ENCODE measurements at regions of chr20 and their contacts with region 1.

Region 1: DNA sequence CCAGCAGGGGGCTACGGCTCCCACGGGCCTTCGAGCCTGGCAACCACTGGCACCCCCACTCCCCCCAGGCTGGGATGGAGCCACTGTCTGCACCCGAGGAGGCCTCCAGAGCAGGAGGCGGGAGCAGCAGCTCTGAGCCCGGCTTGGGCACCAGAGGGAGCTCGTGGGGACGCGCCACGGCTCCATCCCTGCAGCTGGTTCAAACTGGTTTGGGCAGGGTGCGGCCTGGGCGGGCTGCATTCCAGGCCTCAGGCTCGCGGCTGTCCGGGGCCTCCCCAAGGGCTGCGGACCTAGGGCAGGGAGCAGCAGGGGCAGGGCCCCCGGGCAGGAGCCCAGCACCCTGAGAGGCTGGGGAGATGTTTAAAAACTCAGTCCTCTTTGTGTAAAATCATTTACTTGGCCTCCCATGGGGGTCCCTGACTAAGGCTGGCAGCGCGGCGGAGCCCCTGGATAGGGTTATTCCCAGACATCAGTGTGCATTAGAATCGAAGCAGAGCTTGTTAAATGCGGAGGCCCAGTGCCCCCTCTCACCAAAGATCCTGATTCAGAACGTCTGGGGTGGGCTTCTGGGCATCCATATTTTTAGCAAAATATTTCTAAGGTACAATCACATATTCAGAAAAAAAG is 4.1 kb upstream of the BCAS4 start:
- DNase-seq: peak; percentile 58 to 89 (median 76)
- ATAC-seq: peak; percentile 54
- H3K4me3 ChIP-seq: peak overlapping the region in 1 of 2 experiments; percentile 10
- H3K4me3 Mint-ChIP-seq: peak overlapping the region; percentile 35
- H3K27ac ChIP-seq: peak overlapping the region; percentile 54 to 82
- H3K27ac Mint-ChIP-seq: peak overlapping the region; percentile 78
- H3K4me1 ChIP-seq: peaks cover 20% of the 10 kb centered on the region
- H3K4me1 Mint-ChIP-seq: peaks cover 17% of the 10 kb centered on the region
- H3K27me3 ChIP-seq: no peaks in the 10 kb centered on the region
- H3K27me3 Mint-ChIP-seq: no peaks in the 10 kb centered on the region
- CTCF ChIP-seq: peak; percentile 74

Region 2: DNA sequence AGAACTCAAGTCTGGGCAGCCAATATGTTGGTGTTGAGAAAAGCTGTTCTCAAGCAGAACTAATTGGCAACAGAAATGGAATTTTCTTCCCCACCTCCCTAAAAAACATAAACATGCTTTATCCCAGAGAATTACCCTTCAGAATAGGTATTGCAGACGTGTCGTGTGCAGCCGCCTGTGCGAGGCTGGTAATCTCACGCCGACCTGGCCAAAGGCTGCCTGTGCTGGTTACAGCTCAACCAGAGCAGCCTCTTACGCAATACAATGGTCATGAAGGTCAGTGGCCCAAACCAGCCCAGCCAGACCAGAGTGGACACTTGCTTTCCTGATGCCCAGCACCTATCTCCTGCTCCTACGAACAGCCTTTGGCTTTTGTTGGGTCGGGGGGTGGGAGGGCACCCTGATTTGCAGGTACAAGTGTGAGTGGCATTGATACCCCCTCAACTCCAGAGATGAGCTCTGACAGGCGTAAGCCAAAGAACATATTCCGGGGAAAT is 110.3 kb before region 1 on chr20:
- CTCF ChIA-PET with region 1: no interaction called
- POLR2A ChIA-PET with region 1: no interaction called
- intact Hi-C with region 1: no loop called
- DNase-seq: no peak
- ATAC-seq: no peak
- H3K4me3 ChIP-seq: no peak overlapping the region
- H3K4me3 Mint-ChIP-seq: no peak overlapping the region
- H3K27ac ChIP-seq: no peak overlapping the region
- H3K27ac Mint-ChIP-seq: no peak overlapping the region
- H3K4me1 ChIP-seq: no peaks in the 10 kb centered on the region
- H3K4me1 Mint-ChIP-seq: no peaks in the 10 kb centered on the region
- H3K27me3 ChIP-seq: no peaks in the 10 kb centered on the region
- H3K27me3 Mint-ChIP-seq: peaks cover 4% of the 10 kb centered on the region
- CTCF ChIP-seq: no peak

Region 3: DNA sequence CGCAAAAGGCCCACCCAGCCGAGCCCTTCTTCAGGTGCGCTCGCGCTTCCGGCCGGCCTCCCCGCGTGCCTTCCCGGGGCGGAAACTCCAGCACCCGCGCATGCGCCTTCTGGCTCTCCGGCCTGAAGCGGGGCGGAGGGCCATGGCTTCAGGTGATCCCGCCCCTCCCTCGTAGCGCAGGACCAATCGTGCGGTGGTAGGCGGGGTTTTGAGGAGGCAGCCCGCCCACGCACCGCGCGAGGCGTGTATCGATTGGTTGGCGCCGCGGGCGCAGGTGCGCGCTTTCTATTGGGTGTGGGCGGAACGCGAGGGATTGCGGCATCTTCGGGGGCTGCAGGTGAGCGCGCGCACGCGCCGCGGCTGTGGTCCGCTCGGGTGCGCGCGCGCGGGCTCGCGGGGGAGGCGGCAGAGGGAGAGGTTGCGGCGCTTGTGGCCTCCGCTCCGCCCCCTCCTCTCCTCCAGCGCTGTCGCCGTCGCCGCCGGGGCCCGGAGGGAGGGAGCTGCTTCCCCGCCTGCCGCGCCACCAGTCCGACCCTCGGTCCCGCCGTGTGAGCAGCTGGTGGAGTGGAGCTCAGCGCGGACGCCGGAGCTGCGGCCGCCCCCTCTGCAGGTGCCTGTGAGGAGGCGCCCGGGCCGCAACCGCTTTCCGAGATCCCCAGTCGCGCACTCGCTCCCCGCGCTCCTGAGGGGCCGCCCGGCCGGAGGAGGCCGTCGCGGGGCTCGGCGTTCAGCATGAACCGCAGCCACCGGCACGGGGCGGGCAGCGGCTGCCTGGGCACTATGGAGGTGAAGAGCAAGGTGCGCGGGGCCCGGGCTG is 59.5 kb before region 1 on chr20 and contains the start of gene PARD6B:
- CTCF ChIA-PET with region 1: interaction called, 3 read pairs
- POLR2A ChIA-PET with region 1: interaction called, 3 read pairs
- intact Hi-C with region 1: loop called (anchors 2 kb)
- DNase-seq: peak; percentile 98 to 100 (median 99)
- ATAC-seq: peak; percentile 96
- H3K4me3 ChIP-seq: peak within 1 kb of the TSS; percentile 72 to 81
- H3K4me3 Mint-ChIP-seq: peak within 1 kb of the TSS; percentile 91
- H3K27ac ChIP-seq: peak within 1 kb of the TSS; percentile 51 to 54
- H3K27ac Mint-ChIP-seq: peak within 1 kb of the TSS; percentile 86
- H3K4me1 ChIP-seq: peaks cover 16% of the 10 kb centered on the region
- H3K4me1 Mint-ChIP-seq: peaks cover 34% of the 10 kb centered on the region
- H3K27me3 ChIP-seq: no peaks in the 10 kb centered on the region
- H3K27me3 Mint-ChIP-seq: no peaks in the 10 kb centered on the region
- CTCF ChIP-seq: no peak
- total RNA-seq, gene PARD6B: 5.6 to 6.3 TPM

Region 4: DNA sequence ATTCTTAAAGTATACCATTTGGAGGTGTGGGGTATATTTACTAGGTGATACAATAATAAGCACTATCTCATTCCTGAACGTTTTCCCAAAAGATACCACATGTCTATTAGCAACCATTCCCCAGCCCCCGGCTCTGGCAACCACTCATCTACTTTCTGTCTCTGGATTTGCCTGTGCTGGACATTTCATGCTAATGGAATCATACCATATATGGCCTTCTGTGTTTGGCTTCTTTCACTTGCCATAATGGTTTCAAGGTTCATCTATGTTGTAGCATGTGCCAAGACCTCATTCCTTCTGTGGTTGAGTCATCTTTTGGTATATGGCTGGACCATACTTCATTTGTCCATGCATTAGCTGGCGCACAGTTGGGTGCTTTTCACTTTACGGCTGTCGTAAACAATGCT is 43.8 kb after region 1 on chr20:
- CTCF ChIA-PET with region 1: interaction called, 18 read pairs
- POLR2A ChIA-PET with region 1: no interaction called
- intact Hi-C with region 1: loop called in 1 of 2 experiments (anchors 5 kb)
- DNase-seq: no peak
- ATAC-seq: no peak
- H3K4me3 ChIP-seq: no peak overlapping the region
- H3K4me3 Mint-ChIP-seq: no peak overlapping the region
- H3K27ac ChIP-seq: no peak overlapping the region
- H3K27ac Mint-ChIP-seq: no peak overlapping the region
- H3K4me1 ChIP-seq: no peaks in the 10 kb centered on the region
- H3K4me1 Mint-ChIP-seq: peaks cover 11% of the 10 kb centered on the region
- H3K27me3 ChIP-seq: no peaks in the 10 kb centered on the region
- H3K27me3 Mint-ChIP-seq: no peaks in the 10 kb centered on the region
- CTCF ChIP-seq: no peak

Region 5: DNA sequence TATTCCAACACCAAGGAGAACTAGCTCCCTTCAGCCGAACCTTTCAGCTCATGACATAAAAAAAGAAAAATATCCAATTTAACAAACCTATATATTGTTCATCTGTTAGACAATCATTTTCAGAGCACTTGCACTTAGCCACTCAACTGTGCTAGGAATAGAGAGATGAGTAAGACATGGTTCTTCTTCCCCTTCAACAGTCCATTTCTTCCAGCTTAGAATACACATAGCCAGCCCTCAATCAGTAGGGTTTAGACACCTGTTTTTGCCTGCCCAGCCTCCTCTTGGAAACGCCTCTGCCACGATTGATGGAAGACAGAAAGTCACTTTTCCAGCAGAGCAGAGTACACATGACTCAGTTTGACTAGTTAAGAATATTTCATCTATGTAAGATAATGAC is 118.6 kb after region 1 on chr20:
- CTCF ChIA-PET with region 1: interaction called, 10 read pairs
- POLR2A ChIA-PET with region 1: interaction called, 4 read pairs
- intact Hi-C with region 1: no loop called
- DNase-seq: no peak
- ATAC-seq: no peak
- H3K4me3 ChIP-seq: no peak overlapping the region
- H3K4me3 Mint-ChIP-seq: no peak overlapping the region
- H3K27ac ChIP-seq: no peak overlapping the region
- H3K27ac Mint-ChIP-seq: peak overlapping the region; percentile 84
- H3K4me1 ChIP-seq: peaks cover 39% of the 10 kb centered on the region
- H3K4me1 Mint-ChIP-seq: peaks cover 76% of the 10 kb centered on the region
- H3K27me3 ChIP-seq: no peaks in the 10 kb centered on the region
- H3K27me3 Mint-ChIP-seq: no peaks in the 10 kb centered on the region
- CTCF ChIP-seq: no peak

Region 6: DNA sequence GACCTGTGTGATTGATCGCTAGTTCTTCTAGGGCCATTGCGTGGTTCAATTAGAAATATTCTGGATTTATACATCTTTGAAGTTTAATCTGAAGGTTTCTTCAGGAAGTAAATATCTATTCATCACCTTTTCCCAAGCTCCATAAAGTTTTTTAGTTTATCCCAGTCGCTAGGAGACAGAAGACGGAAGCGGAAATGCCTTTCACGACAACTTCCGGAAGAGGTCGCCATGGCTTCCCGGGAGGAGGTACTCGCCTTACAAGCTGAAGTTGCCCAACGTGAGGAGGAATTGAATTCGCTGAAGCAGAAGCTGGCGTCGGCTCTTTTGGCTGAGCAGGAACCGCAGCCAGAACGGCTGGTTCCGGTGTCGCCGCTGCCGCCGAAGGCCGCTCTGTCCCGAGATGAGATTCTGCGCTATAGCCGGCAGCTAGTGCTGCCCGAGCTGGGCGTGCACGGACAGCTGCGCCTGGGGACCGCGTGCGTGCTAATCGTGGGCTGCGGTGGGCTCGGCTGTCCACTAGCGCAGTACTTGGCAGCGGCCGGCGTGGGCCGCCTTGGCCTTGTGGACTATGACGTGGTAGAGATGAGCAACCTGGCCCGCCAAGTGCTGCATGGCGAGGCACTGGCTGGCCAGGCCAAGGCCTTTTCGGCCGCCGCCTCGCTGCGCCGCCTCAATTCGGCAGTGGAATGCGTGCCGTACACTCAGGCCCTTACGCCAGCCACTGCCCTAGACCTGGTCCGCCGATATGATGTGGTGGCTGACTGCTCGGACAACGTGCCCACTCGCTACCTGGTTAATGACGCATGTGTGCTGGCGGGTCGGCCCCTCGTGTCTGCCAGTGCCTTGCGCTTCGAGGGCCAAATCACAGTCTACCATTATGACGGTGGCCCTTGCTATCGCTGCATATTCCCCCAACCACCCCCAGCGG is 168.1 kb after region 1 on chr20 and contains the start of gene MOCS3:
- CTCF ChIA-PET with region 1: interaction called, 24 read pairs
- POLR2A ChIA-PET with region 1: interaction called, 23 read pairs
- intact Hi-C with region 1: loop called (anchors 1 kb)
- DNase-seq: peak; percentile 65 to 95 (median 82)
- ATAC-seq: peak; percentile 77
- H3K4me3 ChIP-seq: peak within 1 kb of the TSS; percentile 73 to 87
- H3K4me3 Mint-ChIP-seq: peak within 1 kb of the TSS; percentile 97
- H3K27ac ChIP-seq: peak within 1 kb of the TSS; percentile 89 to 99
- H3K27ac Mint-ChIP-seq: peak within 1 kb of the TSS; percentile 99
- H3K4me1 ChIP-seq: peaks cover 38% of the 10 kb centered on the region
- H3K4me1 Mint-ChIP-seq: peaks cover 64% of the 10 kb centered on the region
- H3K27me3 ChIP-seq: no peaks in the 10 kb centered on the region
- H3K27me3 Mint-ChIP-seq: no peaks in the 10 kb centered on the region
- CTCF ChIP-seq: no peak
- total RNA-seq, gene MOCS3: 3.6 to 4.1 TPM

Region 7: DNA sequence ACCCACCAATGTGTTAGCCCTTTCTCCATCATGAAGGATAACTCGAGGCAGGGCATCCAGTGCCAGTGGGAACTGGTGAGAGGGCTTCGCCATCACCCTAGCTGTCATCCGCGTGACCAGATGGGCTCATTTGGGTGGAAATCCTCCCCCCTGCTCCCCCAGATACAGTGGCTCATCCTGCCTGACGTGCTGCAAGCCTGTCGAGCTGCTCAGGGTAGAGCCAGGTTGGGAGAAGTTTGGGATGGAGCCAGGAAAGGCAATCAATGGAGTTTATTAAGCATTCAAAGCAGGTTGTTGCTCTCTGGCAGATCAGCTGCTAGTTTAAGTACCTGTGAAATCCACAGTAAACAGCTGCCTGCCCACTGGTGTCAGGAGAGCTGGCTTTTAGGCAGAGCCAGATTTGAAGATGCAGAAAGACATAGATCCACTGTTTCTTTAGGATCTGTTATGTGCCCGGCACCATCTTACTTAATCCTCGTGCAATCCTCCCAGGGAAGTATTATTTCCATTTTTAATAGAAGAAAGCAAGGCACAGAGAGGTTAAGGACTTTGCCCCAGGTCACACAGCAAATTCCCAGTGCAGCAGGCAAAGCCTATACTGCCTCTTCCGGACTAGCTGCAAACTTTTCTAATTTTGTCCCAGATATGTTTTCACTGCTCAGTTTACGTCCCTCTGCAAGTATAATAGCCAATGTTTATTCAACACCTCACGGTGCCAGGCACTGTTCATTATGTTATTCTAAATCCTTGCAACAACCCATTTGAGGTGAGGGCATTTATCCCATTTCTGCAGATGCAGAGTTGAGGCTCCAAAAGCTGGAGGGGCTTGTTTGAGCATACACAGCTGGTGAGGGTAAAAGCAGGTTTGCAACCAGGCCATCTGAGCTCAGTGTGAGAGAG is 286.3 kb after region 1 on chr20:
- CTCF ChIA-PET with region 1: no interaction called
- POLR2A ChIA-PET with region 1: no interaction called
- intact Hi-C with region 1: no loop called
- DNase-seq: no peak
- ATAC-seq: no peak
- H3K4me3 ChIP-seq: no peak overlapping the region
- H3K4me3 Mint-ChIP-seq: no peak overlapping the region
- H3K27ac ChIP-seq: no peak overlapping the region
- H3K27ac Mint-ChIP-seq: no peak overlapping the region
- H3K4me1 ChIP-seq: no peaks in the 10 kb centered on the region
- H3K4me1 Mint-ChIP-seq: peaks cover 5% of the 10 kb centered on the region
- H3K27me3 ChIP-seq: peaks cover 0 to 3% of the 10 kb centered on the region in 2 experiments
- H3K27me3 Mint-ChIP-seq: peaks cover 39% of the 10 kb centered on the region
- CTCF ChIP-seq: no peak

Region 8: DNA sequence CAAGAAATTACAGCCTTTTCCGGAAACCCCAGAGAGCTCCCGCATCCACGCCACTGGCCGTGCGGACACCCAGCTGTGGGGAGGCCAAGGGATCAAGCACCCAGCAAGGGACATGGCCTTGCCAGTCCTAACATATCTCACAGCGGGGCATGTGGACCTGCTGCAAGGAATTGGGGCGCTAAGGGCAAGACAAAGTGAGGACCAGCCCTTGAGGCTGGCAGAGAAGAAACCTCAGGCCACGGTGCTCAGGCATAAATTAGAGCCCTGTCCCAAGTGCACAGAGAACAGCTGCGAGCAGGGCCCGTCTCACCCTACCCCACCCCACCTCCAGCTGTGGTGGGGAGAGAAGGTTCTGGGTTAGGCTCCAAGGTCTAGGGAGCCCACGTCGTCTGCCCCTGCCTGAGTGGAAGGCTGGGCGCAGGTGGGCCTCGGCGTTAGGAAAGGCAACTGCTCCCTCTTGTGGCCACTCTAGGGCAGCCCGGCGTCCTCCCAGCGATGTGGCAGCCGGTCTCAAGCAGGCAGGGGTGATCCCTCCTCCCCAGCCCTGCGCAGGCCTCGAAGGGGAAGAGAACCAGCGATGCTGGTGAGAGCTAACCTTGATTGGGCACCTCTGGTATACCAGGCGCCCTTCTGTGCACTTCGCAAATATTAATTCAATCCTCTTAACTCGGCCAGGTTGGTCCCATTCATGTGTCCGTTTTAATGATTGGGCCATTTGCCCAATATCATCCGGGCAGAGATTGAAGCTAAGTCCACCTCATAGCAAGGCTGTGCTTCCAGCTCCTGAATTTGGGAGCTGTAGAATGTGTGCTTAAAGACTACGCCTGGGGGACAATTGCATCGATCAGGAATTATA is 516.0 kb after region 1 on chr20:
- CTCF ChIA-PET with region 1: interaction called, 7 read pairs
- POLR2A ChIA-PET with region 1: no interaction called
- intact Hi-C with region 1: loop called in 1 of 2 experiments (anchors 1 kb)
- DNase-seq: peak; percentile 47 to 82 (median 74)
- ATAC-seq: peak; percentile 90
- H3K4me3 ChIP-seq: no peak overlapping the region
- H3K4me3 Mint-ChIP-seq: no peak overlapping the region
- H3K27ac ChIP-seq: no peak overlapping the region
- H3K27ac Mint-ChIP-seq: no peak overlapping the region
- H3K4me1 ChIP-seq: no peaks in the 10 kb centered on the region
- H3K4me1 Mint-ChIP-seq: peaks cover 5% of the 10 kb centered on the region
- H3K27me3 ChIP-seq: peaks cover 0 to 2% of the 10 kb centered on the region in 2 experiments
- H3K27me3 Mint-ChIP-seq: peaks cover 12% of the 10 kb centered on the region
- CTCF ChIP-seq: peak; percentile 77